GM18951 (cell line): ENCODE measurements at regions of chr20 and their contacts with region 1.

Region 1: GRCh38 chr20:20083807-20084206 is 31.5 kb downstream of the CFAP61 start:
- POLR2A ChIP-seq: no peak

Region 2: GRCh38 chr20:18507218-18508021 is 1576.4 kb before region 1 on chr20 and contains the start of gene SEC23B:
- in situ Hi-C with region 1: no loop called
- POLR2A ChIP-seq: peak; percentile 84

Region 3: DNA sequence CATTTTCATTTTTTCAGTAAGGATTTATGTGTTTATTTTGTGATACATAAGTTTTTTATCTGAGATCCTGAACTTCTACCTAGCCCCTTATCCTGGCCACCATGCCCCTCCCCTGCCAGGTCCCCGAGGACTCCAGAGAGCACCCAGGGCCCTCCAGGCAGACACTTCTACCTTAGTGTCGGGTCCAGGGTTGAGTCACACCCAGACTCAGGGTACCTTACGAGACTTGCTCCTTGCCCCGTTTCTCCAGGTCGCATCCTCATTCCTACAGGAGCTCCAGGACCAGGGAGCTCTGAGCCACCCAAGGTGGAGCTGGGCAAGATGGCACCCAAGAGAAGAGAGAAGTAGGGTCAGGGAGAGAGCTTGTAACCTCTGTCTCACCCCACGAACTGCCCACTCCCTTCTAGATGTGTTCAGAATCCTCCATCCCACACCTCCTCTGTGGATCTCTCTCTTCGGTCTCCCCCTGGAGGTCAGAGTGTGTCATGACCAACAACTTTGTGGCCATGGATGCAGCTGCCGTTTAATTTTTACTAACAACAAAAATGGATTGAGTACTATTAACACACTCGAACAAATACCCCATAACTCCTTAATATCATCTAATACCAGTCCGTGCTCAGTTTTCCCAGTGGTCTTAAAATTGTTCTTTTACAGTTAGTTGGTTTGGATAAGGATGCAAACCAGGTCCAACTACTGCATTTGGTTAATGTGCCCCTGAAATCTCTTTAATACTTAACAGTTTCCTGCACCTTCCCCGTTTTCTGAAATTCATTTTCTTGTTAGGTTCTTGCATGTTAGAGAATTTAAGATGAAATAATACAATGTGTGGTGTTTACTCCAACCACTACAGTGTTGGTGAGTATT is 153.5 kb after region 1 on chr20:
- in situ Hi-C with region 1: loop called (anchors 25 kb)
- POLR2A ChIP-seq: no peak